ENCODE measurements at regions of chrX and their contacts with region 1.

Region 1: DNA sequence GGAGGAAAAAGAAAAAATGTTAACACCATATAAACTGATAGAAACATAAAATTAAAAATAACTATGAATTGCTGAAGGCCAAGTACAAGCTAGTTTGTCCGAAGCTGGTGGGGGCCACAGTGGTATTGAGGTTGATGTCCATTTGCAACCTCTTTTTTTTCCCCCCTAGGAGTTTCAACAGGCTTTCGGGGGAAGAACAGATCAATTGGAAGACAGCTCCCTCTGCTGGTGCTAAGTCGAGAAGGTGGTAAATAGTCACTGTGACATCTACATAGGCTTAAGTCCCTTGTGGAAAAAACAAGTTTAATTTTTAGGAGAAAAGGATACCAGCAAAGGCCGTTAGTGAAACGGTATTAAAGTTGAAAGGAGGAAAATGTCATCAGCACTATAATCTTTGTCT is 115.7 kb upstream of the ZXDA start:
- DNase-seq: peak in 11 of 14 experiments; percentile 2 to 60 (median 11)
- ATAC-seq: no peak
- H3K4me3 ChIP-seq: no peak overlapping the region
- H3K4me3 Mint-ChIP-seq: no peak overlapping the region
- H3K27ac ChIP-seq: no peak overlapping the region
- H3K27ac Mint-ChIP-seq: no peak overlapping the region
- H3K4me1 ChIP-seq: peaks cover 6% of the 10 kb centered on the region
- H3K4me1 Mint-ChIP-seq: no peaks in the 10 kb centered on the region
- H3K27me3 ChIP-seq: no peaks in the 10 kb centered on the region
- H3K27me3 Mint-ChIP-seq: no peaks in the 10 kb centered on the region
- CTCF ChIP-seq: peak; percentile 58

Region 2: GRCh38 chrX:57573754-57574153 is 452.2 kb before region 1 on chrX:
- CTCF ChIA-PET with region 1: no interaction called
- POLR2A ChIA-PET with region 1: no interaction called
- intact Hi-C with region 1: loop called in 1 of 2 experiments (anchors 2 kb)
- DNase-seq: peak in 4 of 14 experiments; percentile 22 to 56 (median 42)
- ATAC-seq: no peak
- H3K4me3 ChIP-seq: no peak overlapping the region
- H3K4me3 Mint-ChIP-seq: no peak overlapping the region
- H3K27ac ChIP-seq: no peak overlapping the region
- H3K27ac Mint-ChIP-seq: no peak overlapping the region
- H3K4me1 ChIP-seq: no peaks in the 10 kb centered on the region
- H3K4me1 Mint-ChIP-seq: no peaks in the 10 kb centered on the region
- H3K27me3 ChIP-seq: no peaks in the 10 kb centered on the region
- H3K27me3 Mint-ChIP-seq: no peaks in the 10 kb centered on the region
- CTCF ChIP-seq: peak; percentile 46

Region 3: GRCh38 chrX:57821703-57822375 is 204.1 kb before region 1 on chrX:
- CTCF ChIA-PET with region 1: interaction called, 4 read pairs
- POLR2A ChIA-PET with region 1: no interaction called
- intact Hi-C with region 1: loop called (anchors 2 kb)
- DNase-seq: peak in 9 of 14 experiments; percentile 1 to 75 (median 22)
- ATAC-seq: peak; percentile 46
- H3K4me3 ChIP-seq: no peak overlapping the region
- H3K4me3 Mint-ChIP-seq: no peak overlapping the region
- H3K27ac ChIP-seq: no peak overlapping the region
- H3K27ac Mint-ChIP-seq: no peak overlapping the region
- H3K4me1 ChIP-seq: peaks cover 4% of the 10 kb centered on the region
- H3K4me1 Mint-ChIP-seq: peaks cover 5% of the 10 kb centered on the region
- H3K27me3 ChIP-seq: no peaks in the 10 kb centered on the region
- H3K27me3 Mint-ChIP-seq: no peaks in the 10 kb centered on the region
- CTCF ChIP-seq: peak; percentile 63